Right ventricle myocardium inferior (tissue), 1 donor: ENCODE measurements at regions of chr12 and their contacts with region 1.

Region 1: DNA sequence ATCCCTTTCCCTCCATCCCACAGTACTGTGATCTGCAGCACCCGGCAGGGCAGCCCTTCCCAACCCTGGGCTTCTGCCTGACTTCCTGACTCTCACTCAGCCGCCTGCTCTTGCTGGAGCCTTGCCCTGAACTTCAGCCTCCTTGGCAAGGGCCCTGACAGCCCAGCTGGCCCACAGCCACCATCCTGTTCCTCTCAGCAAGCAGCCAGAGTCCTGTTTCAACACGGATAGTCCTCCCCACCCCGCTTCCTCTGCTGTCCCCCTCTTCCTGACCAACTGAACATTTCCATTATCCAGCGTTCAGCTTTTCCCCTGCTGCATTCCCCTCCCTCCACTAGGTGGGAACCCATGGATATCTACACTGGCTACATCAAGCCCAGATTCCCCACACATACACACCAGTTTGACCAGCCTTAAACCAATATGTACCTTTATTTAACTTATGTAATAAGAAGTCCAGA is 74.0 kb upstream of the MDM1 start:
- DNase-seq: peak; percentile 95
- ATAC-seq: peak; percentile 98

Region 2: DNA sequence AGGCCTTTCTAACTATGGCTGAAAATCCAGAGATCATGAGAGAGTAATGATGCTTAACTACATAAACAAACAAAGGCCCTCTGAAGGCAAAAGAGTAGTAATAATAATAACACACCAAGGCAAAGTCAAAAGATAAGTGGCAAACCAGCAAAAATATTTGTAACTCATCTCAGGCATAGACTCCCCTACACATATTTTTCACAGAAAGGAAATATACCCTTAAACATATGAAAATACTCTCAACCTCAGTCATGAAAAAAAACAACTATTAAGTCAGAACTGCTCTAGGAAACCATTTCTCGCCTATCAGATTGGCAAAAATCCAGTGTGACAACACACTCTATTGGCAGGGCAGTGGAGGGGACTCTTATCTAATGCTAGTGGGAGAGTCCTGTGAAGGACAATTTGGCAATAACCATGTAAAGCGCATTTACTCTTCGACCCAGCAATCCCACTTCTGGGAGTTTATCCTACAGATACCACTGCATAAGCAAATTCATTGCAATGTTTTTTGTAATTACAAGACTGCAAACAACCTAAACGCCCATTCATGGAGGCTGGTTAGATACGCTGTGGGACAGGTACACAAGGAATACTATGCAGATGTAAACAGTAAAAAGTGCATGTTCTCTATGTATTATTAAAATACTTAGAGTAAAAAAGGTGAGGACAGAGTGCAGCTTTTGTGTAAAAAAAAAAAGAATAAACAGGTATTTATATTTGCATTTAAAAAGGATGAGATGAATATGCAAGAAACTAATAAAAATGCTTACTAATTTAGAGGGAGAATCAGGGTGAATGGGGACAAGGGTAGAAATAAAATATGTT is 126.7 kb before region 1 on chr12:
- intact Hi-C with region 1: no loop called
- DNase-seq: no peak
- ATAC-seq: no peak

Region 3: DNA sequence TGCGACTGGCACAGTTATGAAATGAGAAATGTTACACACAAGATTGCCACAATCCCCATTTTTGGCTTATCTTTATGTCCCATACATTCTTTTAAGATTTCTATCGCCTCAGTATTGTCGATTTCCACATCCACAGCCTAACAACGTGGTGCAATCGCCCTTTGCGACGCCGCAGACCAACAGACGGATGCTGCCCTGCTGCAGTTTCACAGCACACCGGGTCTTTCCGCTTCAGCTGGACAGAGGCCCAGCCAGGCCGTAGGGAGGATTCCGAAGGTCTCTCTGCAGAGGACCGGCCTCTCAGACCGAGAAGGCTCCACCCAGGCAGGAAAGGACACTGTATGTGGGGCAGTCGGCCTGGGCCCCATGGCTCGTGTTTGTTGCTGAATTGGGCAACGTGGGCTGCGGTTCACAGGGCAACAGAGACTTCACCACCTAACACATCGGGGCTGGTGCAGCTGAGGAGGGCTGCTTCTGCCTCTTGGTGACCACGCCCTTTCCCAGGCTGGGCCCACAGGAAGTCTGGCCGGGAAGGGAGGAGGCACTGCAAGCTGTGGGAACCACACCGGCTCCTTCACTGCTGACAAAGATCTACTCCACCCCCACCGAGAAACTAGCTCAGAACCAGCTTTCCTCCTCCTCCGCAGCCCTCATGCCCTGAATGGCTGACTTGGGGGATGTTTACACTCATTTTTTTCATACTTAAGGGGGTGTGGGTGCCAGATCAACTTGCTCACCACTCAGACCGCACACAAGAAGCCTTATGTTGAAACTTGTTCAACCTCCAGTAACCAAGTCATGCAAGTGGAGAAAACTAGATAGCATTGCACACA is 41.1 kb before region 1 on chr12:
- intact Hi-C with region 1: loop called (anchors 2 kb)
- DNase-seq: peak; percentile 96
- ATAC-seq: peak; percentile 97

Region 4: DNA sequence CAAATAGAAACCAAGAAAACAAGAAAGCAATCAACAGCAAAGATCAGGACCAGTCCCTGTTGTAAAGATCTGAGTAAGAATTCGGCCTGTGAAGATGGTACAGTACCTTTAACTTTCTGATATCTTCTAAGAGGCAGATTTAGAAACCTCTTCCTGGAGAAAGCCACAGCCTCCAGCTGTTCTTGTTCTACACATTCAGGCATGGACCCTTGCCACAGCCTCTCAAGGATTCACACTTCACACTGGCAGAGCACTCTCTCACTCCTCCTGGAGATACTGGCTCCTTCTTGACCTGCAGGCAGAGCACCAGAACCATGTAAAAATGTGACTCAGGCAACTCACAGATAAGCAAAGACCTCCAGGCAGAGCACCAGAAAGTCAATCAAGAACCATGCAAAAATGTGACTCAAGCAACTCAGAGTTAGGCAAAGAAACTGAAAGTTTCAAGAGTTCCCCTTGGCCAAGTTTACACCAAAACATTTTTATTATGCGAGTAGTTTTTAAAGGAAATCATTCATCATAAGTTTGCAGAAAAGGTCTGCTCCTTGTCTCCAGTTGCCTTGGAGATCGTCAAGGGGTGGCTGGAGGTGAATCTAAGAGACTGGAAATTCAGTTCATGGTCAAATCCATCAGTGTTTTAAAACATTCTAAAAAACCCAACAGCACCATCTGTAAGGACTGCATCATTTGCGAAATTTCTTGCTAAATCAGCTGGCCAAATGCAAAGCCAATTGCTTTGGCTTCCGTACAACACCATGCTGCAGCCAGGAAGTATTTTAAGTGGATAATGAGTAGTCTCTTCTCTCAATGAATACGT is 45.3 kb after region 1 on chr12:
- intact Hi-C with region 1: loop called (anchors 2 kb)
- DNase-seq: no peak
- ATAC-seq: peak; percentile 73

Region 5: GRCh38 chr12:68610370-68611093 is 204.4 kb after region 1 on chr12 and contains the start of gene RAP1B:
- intact Hi-C with region 1: loop called (anchors 2 kb)
- DNase-seq: peak; percentile 95
- ATAC-seq: peak; percentile 97
- total RNA-seq, gene RAP1B: 51.8 TPM

Region 6: GRCh38 chr12:68686595-68687521 is 280.7 kb after region 1 on chr12 and contains the start of gene NUP107:
- intact Hi-C with region 1: loop called (anchors 1 kb)
- DNase-seq: peak; percentile 99
- ATAC-seq: peak; percentile 99
- total RNA-seq, gene NUP107: 19.1 TPM